ENCODE measurements at regions of chr2 and their contacts with region 1.

Region 1: DNA sequence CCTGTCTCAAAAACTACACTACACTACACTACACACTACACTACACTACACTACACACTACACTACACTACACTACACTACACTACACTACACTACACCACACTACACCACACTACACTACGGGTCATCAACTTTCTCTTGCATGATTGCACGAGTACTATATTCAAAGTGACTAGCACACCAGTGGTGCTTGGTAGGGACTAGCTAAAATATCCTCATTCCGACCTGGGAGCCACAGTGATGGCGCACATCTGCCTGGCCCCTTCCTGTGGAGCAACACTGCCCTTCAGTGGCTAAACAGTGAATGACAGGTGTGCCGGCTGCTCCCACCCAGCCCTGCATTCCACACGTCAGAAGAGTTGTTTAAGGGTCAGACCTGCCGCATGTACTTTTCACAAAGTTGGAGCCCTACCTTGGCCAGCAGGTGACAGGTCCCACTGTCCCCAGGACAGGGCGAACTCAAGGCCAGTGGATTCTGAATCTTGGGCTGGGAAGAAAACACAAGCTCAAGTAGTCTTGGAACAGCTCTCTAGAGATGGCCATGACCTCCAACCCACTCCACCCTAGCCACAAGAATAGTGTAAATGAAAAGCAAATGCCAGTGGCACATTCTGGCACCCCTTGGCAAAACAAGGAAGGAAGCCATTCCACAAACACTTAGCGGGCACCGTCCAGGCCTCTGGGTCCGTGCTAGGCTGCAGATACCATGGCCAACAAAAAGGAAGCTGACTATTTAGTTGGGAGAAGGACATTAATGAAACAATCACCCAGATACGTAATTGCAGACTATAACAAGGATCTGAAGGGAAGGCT is 79.7 kb upstream of the MSH2 start:
- DNase-seq: peak; percentile 84
- ATAC-seq: peak; percentile 100
- H3K4me3 ChIP-seq: no peak overlapping the region
- H3K4me3 Mint-ChIP-seq: no peak overlapping the region
- H3K27ac ChIP-seq: no peak overlapping the region
- H3K27ac Mint-ChIP-seq: no peak overlapping the region
- H3K4me1 ChIP-seq: peaks cover 10 to 31% of the 10 kb centered on the region in 2 donors
- H3K4me1 Mint-ChIP-seq: peaks cover 8% of the 10 kb centered on the region
- H3K27me3 ChIP-seq: peaks cover 0 to 3% (median 0%) of the 10 kb centered on the region in 4 experiments
- H3K27me3 Mint-ChIP-seq: no peaks in the 10 kb centered on the region
- CTCF ChIP-seq: peak; percentile 92

Region 2: DNA sequence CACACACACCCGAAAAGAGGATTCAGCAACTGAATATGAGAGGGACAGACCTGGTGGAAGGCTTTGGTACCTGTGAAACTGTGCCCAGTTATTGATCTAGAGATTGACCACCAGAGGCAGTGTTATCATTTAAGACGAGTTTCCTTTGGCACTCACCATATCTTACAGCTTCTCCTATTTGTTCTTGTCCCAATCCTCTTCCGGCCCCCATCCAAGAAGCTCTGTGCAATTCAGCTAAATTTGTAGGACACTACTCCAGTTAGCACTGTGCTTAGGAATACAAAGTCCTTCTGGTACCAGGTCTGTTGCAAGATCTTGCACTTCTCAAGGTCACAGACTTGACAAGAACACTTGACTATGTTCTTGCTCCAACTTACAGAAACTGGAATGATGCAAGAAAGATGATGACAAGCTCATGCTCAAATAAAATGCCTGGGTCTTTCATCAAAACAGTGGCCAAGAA is 666.1 kb before region 1 on chr2:
- CTCF ChIA-PET with region 1: interaction called, 9 read pairs
- POLR2A ChIA-PET with region 1: no interaction called
- intact Hi-C with region 1: loop called (anchors 5 kb)
- DNase-seq: peak; percentile 50
- ATAC-seq: no peak
- H3K4me3 ChIP-seq: no peak overlapping the region
- H3K4me3 Mint-ChIP-seq: no peak overlapping the region
- H3K27ac ChIP-seq: no peak overlapping the region
- H3K27ac Mint-ChIP-seq: no peak overlapping the region
- H3K4me1 ChIP-seq: peaks cover 3% of the 10 kb centered on the region in 2 donors
- H3K4me1 Mint-ChIP-seq: peaks cover 6% of the 10 kb centered on the region
- H3K27me3 ChIP-seq: peaks cover 0 to 2% (median 0%) of the 10 kb centered on the region in 4 experiments
- H3K27me3 Mint-ChIP-seq: peaks cover 6% of the 10 kb centered on the region
- CTCF ChIP-seq: peak; percentile 62

Region 3: GRCh38 chr2:47272031-47272864 is 51.0 kb before region 1 on chr2:
- CTCF ChIA-PET with region 1: interaction called, 26 read pairs
- POLR2A ChIA-PET with region 1: no interaction called
- intact Hi-C with region 1: loop called (anchors 1 kb)
- DNase-seq: peak; percentile 73
- ATAC-seq: peak; percentile 88
- H3K4me3 ChIP-seq: peak overlapping the region in 4 of 5 experiments; percentile 43 to 56 (median 48)
- H3K4me3 Mint-ChIP-seq: peak overlapping the region; percentile 85
- H3K27ac ChIP-seq: peak overlapping the region in 1 of 2 donors; percentile 4
- H3K27ac Mint-ChIP-seq: peak overlapping the region; percentile 61
- H3K4me1 ChIP-seq: peaks cover 18 to 27% of the 10 kb centered on the region in 2 donors
- H3K4me1 Mint-ChIP-seq: peaks cover 23% of the 10 kb centered on the region
- H3K27me3 ChIP-seq: peaks cover 0 to 2% (median 0%) of the 10 kb centered on the region in 4 experiments
- H3K27me3 Mint-ChIP-seq: no peaks in the 10 kb centered on the region
- CTCF ChIP-seq: peak; percentile 99

Region 4: GRCh38 chr2:47309952-47310800 is 13.0 kb before region 1 on chr2:
- CTCF ChIA-PET with region 1: interaction called, 77 read pairs
- POLR2A ChIA-PET with region 1: interaction called, 3 read pairs
- intact Hi-C with region 1: loop called (anchors 1 kb)
- DNase-seq: peak; percentile 73
- ATAC-seq: peak; percentile 81
- H3K4me3 ChIP-seq: peak overlapping the region in 2 of 5 experiments; percentile 5 to 46
- H3K4me3 Mint-ChIP-seq: peak overlapping the region; percentile 77
- H3K27ac ChIP-seq: peak overlapping the region; percentile 51 to 55
- H3K27ac Mint-ChIP-seq: peak overlapping the region; percentile 98
- H3K4me1 ChIP-seq: peaks cover 27 to 34% of the 10 kb centered on the region in 2 donors
- H3K4me1 Mint-ChIP-seq: peaks cover 43% of the 10 kb centered on the region
- H3K27me3 ChIP-seq: no peaks in the 10 kb centered on the region
- H3K27me3 Mint-ChIP-seq: no peaks in the 10 kb centered on the region
- CTCF ChIP-seq: no peak

Region 5: DNA sequence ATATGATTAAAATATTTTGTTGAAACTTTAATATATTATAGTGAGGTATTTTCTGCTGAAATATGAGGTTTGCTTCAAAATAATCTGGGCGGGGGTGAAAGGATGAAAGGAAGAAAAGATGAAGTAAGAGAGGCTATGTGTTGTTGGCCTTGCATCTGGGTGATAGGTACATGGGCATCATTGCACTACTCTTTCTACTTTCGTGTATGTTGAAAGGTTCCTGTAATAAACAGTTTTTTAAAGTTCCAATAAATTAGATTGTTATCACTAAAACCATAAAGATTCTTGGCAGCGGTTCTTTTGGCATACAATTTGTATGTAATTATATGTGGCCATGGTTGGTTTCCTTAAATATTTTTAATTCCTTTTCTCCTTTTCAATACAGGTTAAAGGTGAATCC is 56.2 kb after region 1 on chr2:
- CTCF ChIA-PET with region 1: no interaction called
- POLR2A ChIA-PET with region 1: no interaction called
- intact Hi-C with region 1: no loop called
- DNase-seq: no peak
- ATAC-seq: no peak
- H3K4me3 ChIP-seq: no peak overlapping the region
- H3K4me3 Mint-ChIP-seq: no peak overlapping the region
- H3K27ac ChIP-seq: no peak overlapping the region
- H3K27ac Mint-ChIP-seq: no peak overlapping the region
- H3K4me1 ChIP-seq: no peaks in the 10 kb centered on the region
- H3K4me1 Mint-ChIP-seq: no peaks in the 10 kb centered on the region
- H3K27me3 ChIP-seq: peaks cover 0 to 3% (median 0%) of the 10 kb centered on the region in 4 experiments
- H3K27me3 Mint-ChIP-seq: no peaks in the 10 kb centered on the region
- CTCF ChIP-seq: no peak

Region 6: GRCh38 chr2:47653902-47654789 is 330.9 kb after region 1 on chr2:
- CTCF ChIA-PET with region 1: no interaction called
- POLR2A ChIA-PET with region 1: no interaction called
- intact Hi-C with region 1: no loop called
- DNase-seq: no peak
- ATAC-seq: no peak
- H3K4me3 ChIP-seq: no peak overlapping the region
- H3K4me3 Mint-ChIP-seq: peak overlapping the region; percentile 60
- H3K27ac ChIP-seq: peak overlapping the region in 1 of 2 donors; percentile 67
- H3K27ac Mint-ChIP-seq: peak overlapping the region; percentile 83
- H3K4me1 ChIP-seq: peaks cover 31 to 45% of the 10 kb centered on the region in 2 donors
- H3K4me1 Mint-ChIP-seq: peaks cover 51% of the 10 kb centered on the region
- H3K27me3 ChIP-seq: no peaks in the 10 kb centered on the region
- H3K27me3 Mint-ChIP-seq: no peaks in the 10 kb centered on the region
- CTCF ChIP-seq: no peak